A673 (cell line): ENCODE measurements at regions of chr19 and their contacts with region 1.

Region 1: DNA sequence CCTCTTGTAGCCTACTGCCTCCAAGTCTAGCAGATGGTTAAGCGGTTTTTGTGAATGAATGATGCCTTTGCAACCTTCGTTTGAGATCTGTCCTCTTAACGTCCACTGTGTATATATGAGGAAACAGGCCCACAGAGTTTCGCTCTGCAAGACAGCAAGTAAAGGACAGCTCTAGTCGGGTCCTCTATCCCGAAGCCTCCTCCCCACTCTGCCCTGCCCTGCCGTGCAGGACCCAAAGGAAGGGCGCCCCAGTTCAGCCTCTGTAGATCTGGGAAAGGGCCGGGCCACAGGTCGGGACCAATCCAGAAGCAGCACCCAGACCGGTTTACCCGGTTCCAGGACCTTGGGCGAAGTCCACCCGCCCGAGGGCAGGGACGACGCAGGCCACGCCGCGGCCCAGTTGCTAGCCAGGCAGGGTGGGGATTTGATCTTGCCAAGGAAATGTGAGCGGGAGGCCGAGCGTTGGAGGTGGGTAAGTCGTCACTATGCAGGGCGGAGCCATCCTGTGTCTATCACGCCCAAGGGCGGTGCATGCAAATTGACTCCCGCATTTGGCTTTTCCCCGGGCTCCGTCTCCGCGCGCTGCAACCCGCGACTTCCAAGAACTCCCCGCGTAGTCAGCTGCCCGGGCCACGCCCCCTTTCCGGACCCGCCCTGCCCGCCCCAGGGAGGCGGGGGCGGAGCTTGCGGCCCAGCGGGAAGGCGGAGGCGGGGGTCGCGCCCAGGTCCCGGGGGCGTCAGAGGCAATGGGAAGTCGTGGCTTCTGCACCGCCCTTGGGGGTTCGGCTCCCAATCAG is 12.5 kb downstream of the IER2 start:
- DNase-seq: peak; percentile 99
- H3K4me3 ChIP-seq: peak overlapping the region; percentile 44
- H3K27ac ChIP-seq: peak overlapping the region; percentile 100
- H3K4me1 ChIP-seq: peaks cover 46% of the 10 kb centered on the region
- H3K27me3 ChIP-seq: no peaks in the 10 kb centered on the region
- CTCF ChIP-seq: no peak

Region 2: DNA sequence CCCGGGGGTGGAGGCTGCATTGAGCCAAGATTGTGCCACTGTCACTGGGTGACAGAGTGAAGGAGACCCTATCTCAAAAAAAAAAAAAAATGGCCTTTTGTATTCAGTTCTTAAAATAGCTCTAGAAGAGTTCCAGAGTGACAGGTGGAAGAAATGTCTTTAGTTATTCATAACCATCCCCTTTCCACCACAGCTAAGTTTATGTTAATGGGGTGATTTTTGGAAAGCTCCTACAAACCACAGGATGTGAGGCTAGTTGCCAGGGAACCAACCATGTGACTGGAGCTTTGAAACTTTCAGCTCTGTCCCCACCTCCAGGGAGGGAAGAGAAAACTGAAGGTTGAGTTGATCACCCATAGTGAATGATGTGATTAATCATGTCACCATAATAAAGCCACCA is 559.0 kb before region 1 on chr19:
- CTCF ChIA-PET with region 1: no interaction called
- POLR2A ChIA-PET with region 1: no interaction called
- intact Hi-C with region 1: no loop called
- DNase-seq: peak; percentile 22
- H3K4me3 ChIP-seq: no peak overlapping the region
- H3K27ac ChIP-seq: no peak overlapping the region
- H3K4me1 ChIP-seq: no peaks in the 10 kb centered on the region
- H3K27me3 ChIP-seq: no peaks in the 10 kb centered on the region
- CTCF ChIP-seq: no peak

Region 3: GRCh38 chr19:12864721-12865715 is 297.7 kb before region 1 on chr19:
- CTCF ChIA-PET with region 1: no interaction called
- POLR2A ChIA-PET with region 1: interaction called, 10 read pairs
- intact Hi-C with region 1: no loop called
- DNase-seq: no peak
- H3K4me3 ChIP-seq: no peak overlapping the region
- H3K27ac ChIP-seq: no peak overlapping the region
- H3K4me1 ChIP-seq: peaks cover 9% of the 10 kb centered on the region
- H3K27me3 ChIP-seq: no peaks in the 10 kb centered on the region
- CTCF ChIP-seq: 0 out of 2 replicates have a peak, but pooled peaks have one; percentile 18

Region 4: DNA sequence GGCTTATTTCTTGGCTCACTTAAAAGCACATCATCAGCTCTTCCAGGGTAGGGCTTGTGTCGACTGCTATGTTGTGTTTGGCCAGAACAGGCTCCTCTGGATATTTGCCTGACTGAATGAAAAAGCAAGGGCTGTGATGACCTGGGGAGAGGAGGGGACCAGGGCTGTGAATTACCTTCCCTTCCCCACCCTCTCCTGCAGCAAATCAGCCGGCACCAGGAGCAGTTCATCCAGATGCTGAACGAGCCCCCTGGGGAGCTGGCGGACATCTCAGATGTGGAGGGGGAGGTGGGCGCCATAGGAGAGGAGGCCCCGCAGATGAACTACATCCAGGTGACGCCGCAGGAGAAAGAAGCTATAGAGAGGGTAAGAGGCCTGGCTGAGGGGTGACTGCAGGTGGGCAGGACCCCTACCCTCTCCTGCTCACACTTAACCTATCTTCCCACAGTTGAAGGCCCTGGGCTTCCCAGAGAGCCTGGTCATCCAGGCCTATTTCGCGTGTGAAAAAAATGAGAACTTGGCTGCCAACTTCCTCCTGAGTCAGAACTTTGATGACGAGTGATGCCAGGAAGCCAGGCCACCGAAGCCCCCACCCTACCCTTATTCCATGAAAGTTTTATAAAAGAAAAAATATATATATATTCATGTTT is 210.1 kb before region 1 on chr19:
- CTCF ChIA-PET with region 1: no interaction called
- POLR2A ChIA-PET with region 1: interaction called, 15 read pairs
- intact Hi-C with region 1: no loop called
- DNase-seq: no peak
- H3K4me3 ChIP-seq: no peak overlapping the region
- H3K27ac ChIP-seq: peak overlapping the region; percentile 24
- H3K4me1 ChIP-seq: peaks cover 35% of the 10 kb centered on the region
- H3K27me3 ChIP-seq: no peaks in the 10 kb centered on the region
- CTCF ChIP-seq: no peak

Region 5: DNA sequence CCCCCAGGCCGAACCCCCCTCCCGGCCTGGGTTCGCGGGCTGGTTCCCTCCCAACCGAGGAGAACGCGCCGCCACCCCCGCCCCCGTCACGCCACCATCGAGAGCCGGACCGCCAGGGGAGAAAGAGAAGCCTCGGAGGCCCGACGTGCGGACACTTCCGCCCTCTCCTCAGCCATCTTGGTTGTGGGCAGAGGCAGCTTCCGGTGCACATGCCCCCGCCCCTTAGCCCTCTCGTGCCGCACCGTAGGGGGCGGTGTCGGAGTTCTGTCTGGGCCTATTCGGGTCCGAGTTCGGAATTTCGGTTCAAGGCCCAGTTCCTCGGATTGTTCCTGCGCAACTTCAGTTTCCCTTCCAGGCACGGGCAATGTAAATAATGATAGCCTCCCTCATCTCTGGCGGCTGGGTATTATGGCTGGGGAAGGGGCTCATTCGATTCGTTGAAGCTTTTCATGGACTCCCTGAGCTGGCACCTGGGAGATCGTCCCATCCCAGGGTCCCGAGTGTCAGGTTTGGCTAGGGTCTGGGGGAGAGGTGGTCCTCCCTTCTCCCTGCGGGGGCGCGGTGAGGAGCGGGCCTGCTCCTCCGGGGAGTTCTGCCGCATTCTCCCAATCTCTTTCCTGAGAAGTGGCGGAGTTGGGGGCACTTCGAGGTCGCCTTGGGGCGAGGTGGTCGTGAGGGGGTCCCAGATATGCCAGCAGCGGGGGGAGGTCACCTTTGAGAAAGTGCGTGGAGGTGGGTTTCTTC is 12.4 kb before region 1 on chr19 and contains the starts of genes IER2 and STX10:
- CTCF ChIA-PET with region 1: interaction called, 8 read pairs
- POLR2A ChIA-PET with region 1: interaction called, 13 read pairs
- intact Hi-C with region 1: loop called (anchors 2 kb)
- DNase-seq: peak; percentile 97
- H3K4me3 ChIP-seq: peak within 1 kb of the TSS; percentile 72
- H3K27ac ChIP-seq: peak within 1 kb of the TSS; percentile 98
- H3K4me1 ChIP-seq: peaks cover 6% of the 10 kb centered on the region
- H3K27me3 ChIP-seq: no peaks in the 10 kb centered on the region
- CTCF ChIP-seq: peak; percentile 55
- total RNA-seq, gene IER2: 148 and 164 TPM in 2 replicates
- total RNA-seq, gene STX10: 63.3 and 69.5 TPM in 2 replicates

Region 6: DNA sequence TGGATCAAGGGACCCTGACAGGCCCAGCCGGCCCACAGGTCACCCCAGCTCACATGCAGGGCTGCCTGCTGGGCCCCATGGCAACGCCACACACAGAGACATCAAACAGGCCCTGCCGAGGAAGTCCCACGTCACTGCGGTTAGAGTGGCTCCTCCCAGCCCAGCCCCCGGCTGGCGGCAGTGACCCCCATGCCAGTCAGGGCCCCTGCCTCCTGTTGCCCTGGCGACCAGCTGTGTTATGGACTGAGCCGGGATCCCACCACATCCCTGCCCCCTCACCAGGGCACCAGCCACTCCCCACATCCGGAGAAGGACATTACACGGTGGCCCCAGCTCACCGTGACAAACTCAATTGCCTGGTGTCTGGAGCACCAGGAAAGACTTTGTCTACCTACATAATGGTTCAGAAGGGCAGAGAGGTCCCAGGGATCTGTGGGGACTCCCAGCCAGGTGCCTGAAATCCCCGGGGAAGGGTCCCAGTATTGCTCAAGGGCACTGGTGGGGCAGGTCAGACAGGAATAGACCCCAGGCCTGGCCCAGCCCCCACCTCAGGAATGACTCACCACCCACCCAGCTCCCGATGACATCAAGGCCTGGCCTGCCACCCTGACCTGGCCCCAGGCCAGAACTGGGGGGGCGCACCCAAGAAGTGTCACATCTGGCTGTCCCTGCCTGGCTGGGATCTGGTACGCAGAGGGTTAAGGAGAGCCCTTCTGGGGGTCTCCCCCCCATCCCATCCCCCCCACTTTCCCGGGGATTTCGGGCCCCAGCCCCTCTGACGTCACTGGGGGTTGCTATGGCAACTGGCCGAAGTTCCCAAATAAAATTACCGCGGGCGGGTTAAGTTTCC is 684.1 kb after region 1 on chr19:
- CTCF ChIA-PET with region 1: no interaction called
- POLR2A ChIA-PET with region 1: no interaction called
- intact Hi-C with region 1: loop called (anchors 10 kb)
- DNase-seq: peak; percentile 94
- H3K4me3 ChIP-seq: peak overlapping the region; percentile 59
- H3K27ac ChIP-seq: peak overlapping the region; percentile 100
- H3K4me1 ChIP-seq: peaks cover 51% of the 10 kb centered on the region
- H3K27me3 ChIP-seq: no peaks in the 10 kb centered on the region
- CTCF ChIP-seq: no peak